ENCODE measurements at regions of chr18 and their contacts with region 1.

Region 1: DNA sequence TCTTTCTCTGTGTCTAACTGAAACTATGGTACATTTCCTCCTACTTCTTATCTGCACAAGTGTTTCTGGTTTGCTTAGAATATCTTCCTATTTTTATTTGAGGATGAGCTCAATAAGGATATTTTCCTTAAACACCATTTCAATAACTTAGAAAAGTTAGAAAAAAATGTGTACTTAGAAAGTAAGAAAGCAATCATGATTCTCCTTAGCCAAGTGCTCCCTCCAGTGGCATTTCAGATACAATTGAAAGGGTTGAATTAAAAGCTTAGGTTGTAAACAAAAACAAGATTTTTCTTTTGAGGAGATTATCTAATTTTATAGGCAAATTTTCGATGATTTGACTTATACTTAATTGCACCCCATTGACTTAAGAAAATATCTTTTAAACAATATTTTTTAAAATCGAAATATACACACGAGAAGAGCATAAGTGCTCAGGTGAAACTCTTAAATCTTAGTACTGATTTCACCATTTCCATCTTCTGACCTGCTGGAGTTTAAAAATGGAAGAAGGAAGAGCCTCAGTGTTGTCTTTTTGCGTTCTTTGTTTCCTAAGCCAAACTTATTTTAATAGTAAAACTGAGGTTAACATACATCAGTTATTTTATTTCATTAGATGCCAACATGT is 26.9 kb downstream of the C18orf63 start:
- DNase-seq: peak in 4 of 7 donors; percentile 39 to 54 (median 47)
- H3K4me3 ChIP-seq: no peak overlapping the region
- H3K27ac ChIP-seq: no peak overlapping the region
- H3K4me1 ChIP-seq: no peaks in the 10 kb centered on the region
- H3K27me3 ChIP-seq: no peaks in the 10 kb centered on the region
- CTCF ChIP-seq: peak; percentile 41 to 88 (median 76)
- POLR2A ChIP-seq: no peak

Region 2: GRCh38 chr18:74023220-74023619 is 319.3 kb before region 1 on chr18:
- intact Hi-C with region 1: loop called in 1 of 2 experiments (anchors 10 kb)
- DNase-seq: no peak
- H3K4me3 ChIP-seq: no peak overlapping the region
- H3K27ac ChIP-seq: no peak overlapping the region
- H3K4me1 ChIP-seq: no peaks in the 10 kb centered on the region
- H3K27me3 ChIP-seq: no peaks in the 10 kb centered on the region
- CTCF ChIP-seq: no peak
- POLR2A ChIP-seq: no peak

Region 3: DNA sequence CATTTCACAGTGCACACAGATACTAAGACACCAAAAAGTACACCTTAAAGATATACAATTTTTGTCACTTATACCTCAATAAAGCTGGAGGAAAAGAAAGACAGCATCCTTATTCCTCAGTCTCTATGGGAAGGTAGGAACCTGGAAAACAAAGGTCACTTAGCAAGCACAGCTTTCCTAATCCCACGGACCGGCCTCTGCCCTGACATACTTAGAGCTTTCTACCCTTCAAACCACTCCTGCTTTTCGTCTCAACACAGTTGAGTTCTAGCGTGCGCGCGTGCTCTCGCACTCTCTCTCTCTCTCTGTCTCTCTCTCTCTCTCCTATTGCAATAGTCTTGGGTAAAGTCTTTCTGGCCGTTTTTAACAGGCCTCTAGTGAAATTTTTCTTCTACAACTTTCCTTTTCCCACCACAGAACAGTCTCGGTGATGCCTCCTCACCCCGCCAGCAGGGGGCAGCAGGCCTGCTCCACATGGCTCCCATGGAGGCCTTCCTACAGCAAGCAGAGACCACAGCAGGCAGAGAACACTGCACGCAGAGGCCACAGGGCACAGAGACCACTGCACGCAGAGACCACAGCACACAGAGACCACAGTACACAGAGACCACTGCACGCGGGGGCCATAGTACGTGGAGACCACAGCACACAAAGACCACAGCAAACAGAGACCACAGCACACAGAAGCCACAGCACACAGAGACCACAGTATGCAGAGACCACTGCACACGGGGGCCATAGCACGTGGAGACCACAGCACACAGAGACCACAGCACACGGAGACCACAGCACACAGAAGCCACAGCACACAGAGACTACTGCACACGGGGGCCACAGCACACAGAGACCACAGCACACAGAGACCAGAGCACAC is 301.8 kb before region 1 on chr18:
- intact Hi-C with region 1: no loop called
- DNase-seq: peak; percentile 28 to 62 (median 37)
- H3K4me3 ChIP-seq: no peak overlapping the region
- H3K27ac ChIP-seq: no peak overlapping the region
- H3K4me1 ChIP-seq: no peaks in the 10 kb centered on the region
- H3K27me3 ChIP-seq: no peaks in the 10 kb centered on the region
- CTCF ChIP-seq: peak; percentile 21 to 55 (median 44)
- POLR2A ChIP-seq: no peak